Left colon (tissue), 2 donors: ENCODE measurements at regions of chr2 and their contacts with region 1.

Region 1: GRCh38 chr2:60998628-60999545 is 18.6 kb upstream of the PEX13 start:
- DNase-seq: no peak
- ATAC-seq: peak; percentile 69

Region 2: DNA sequence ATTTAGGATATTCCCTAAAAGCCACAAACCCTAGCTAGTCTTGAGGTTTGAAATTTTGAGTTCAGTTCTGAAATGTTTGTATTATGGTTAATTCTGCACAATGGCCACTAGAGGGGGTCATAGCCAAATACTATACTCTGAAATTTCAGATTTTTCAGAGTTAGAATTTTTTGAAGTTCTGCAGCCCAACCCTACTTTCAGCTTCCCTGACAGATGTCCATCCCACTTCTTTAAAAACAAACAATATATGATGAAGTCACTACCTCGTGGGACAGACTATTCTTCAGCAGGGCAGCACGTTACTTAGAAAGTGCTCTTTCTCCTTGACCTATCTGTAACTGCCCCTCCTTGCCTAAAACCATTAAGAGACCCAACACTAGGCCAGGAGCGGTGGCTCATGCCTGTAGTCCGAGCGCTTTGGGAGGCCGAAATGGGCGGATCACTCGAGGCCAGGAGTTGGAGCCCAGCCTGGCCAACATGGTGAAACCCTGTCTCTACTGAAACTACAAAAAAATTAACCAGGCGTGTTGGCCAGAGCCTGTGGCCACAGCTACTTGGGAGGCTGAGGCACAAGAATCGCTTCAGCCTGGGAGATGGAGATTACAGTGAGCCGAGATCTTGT is 291.0 kb before region 1 on chr2:
- intact Hi-C with region 1: loop called in 1 of 2 experiments (anchors 2 kb)
- DNase-seq: no peak
- ATAC-seq: peak; percentile 54

Region 3: DNA sequence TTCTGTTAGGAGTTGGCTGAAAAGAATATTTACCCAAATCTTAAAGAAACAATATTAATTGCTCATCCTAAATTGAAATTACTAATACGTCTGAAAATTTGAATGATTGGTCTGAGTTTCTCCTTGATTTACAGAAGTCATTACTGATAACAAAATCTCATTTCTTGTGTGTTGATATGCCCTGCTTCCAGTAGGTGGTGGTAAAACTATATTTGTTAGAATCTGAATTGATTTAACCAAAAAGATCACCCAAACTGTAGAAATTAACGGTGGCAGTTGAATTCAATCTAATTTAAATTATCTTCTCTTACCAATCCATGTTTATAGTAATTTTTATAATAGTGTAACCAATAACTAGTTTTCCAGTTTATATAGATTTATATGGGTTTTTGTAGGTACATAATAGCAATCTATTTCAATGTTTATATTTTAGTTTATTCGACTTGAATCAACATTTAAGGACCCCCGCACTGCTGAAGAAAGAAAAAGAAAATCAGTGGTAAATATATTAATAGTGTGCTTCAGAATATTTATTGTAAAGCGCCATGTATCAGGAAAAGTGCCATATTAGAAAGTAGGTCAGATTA is 204.5 kb before region 1 on chr2:
- intact Hi-C with region 1: loop called in 1 of 2 experiments (anchors 10 kb)
- DNase-seq: no peak
- ATAC-seq: peak; percentile 52

Region 4: GRCh38 chr2:60840880-60841279 is 158.0 kb before region 1 on chr2:
- intact Hi-C with region 1: no loop called
- DNase-seq: peak in 1 of 2 donors; percentile 15
- ATAC-seq: no peak